ENCODE measurements at regions of chr2 and their contacts with region 1.

Region 1: GRCh38 chr2:37982147-37982582 is 57.1 kb downstream of the RMDN2 start:
- DNase-seq: peak; percentile 52
- H3K4me3 ChIP-seq: no peak overlapping the region
- H3K27ac ChIP-seq: no peak overlapping the region
- H3K4me1 ChIP-seq: peaks cover 11% of the 10 kb centered on the region
- H3K27me3 ChIP-seq: no peaks in the 10 kb centered on the region
- CTCF ChIP-seq: peak; percentile 77 to 80

Region 2: GRCh38 chr2:37397166-37397565 is 585.0 kb before region 1 on chr2:
- CTCF ChIA-PET with region 1: no interaction called
- dilution Hi-C with region 1: no loop called
- in situ Hi-C with region 1: no loop called
- intact Hi-C with region 1: loop called (anchors 2 kb)
- DNase-seq: no peak
- H3K4me3 ChIP-seq: no peak overlapping the region
- H3K27ac ChIP-seq: no peak overlapping the region
- H3K4me1 ChIP-seq: no peaks in the 10 kb centered on the region
- H3K27me3 ChIP-seq: no peaks in the 10 kb centered on the region
- CTCF ChIP-seq: no peak

Region 3: GRCh38 chr2:37890893-37891495 is 91.2 kb before region 1 on chr2:
- CTCF ChIA-PET with region 1: no interaction called
- dilution Hi-C with region 1: no loop called
- in situ Hi-C with region 1: no loop called
- intact Hi-C with region 1: loop called (anchors 2 kb)
- DNase-seq: peak; percentile 40
- H3K4me3 ChIP-seq: no peak overlapping the region
- H3K27ac ChIP-seq: no peak overlapping the region
- H3K4me1 ChIP-seq: peaks cover 16% of the 10 kb centered on the region
- H3K27me3 ChIP-seq: no peaks in the 10 kb centered on the region
- CTCF ChIP-seq: peak; percentile 67 to 82

Region 4: DNA sequence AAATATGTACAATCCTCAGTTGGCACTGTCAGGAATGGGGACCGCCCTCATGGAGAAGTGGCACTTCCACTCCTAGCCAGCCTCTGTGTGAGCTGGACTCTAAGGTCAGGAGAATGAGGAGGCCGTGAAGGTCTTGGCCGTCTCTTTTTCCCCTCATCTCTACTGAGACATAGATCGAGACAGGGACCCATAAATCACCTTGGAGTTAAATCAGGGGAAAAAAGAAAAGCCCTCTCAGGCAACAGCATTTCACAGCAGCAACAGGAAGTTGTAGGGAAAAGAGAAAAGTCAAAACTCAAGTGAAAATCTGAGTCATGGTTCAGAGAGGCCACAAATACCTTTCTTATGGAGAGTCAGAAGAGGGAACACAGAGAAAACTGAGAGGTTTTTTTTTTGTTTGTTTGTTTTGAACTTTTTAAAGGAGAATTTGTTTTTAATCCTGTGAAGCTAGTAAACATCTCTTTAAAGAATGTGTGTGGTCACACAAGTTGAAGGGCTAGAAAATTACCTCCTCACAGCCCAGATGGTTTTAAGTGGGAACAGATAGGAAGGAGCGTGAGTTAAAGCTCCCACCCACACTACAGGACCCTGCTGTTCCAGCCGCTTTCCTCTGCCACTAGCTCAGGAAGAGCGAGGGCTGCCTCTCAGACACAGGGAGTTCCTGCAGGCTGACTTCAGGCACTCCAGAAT is 124.4 kb after region 1 on chr2:
- CTCF ChIA-PET with region 1: no interaction called
- dilution Hi-C with region 1: no loop called
- in situ Hi-C with region 1: loop called (anchors 10 kb)
- intact Hi-C with region 1: no loop called
- DNase-seq: peak; percentile 60
- H3K4me3 ChIP-seq: no peak overlapping the region
- H3K27ac ChIP-seq: peak overlapping the region; percentile 74
- H3K4me1 ChIP-seq: peaks cover 27% of the 10 kb centered on the region
- H3K27me3 ChIP-seq: no peaks in the 10 kb centered on the region
- CTCF ChIP-seq: no peak

Region 5: DNA sequence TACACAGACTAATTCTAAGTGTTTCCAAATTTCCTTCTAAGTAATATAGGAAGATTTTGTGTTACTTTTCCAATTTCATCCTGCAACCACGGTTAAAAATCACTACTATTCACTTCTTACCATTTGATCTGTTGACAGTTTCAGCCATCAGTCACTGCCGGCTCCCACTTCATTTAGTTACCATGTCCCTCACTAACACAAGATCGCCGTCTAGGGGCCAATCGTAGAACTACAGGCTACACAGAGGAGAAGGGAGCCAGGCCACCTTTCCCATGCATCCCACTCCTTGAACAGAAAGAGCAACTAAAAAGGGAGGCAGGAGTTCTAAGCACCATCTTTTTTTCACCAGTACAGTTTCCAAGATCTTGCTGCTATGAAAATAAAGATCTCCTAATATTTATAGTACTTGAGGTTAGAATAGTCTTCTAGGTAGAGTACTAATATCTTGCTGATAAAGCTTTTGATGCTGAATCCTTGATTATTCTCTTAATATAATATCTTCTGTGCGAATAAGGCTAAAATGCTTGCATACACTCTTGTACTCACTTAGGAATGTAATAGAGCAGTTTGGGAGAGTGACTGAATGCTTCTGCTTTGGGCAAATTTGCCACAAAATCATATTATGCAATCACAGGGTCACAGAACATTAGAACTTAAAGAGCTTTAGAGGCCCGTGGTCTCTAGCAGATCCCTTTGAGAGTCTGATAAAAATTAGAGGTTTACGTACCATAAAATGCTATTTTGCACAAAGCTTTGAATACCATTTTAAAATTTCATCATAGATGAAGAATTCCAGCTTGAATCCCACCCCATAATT is 133.3 kb after region 1 on chr2:
- CTCF ChIA-PET with region 1: no interaction called
- dilution Hi-C with region 1: no loop called
- in situ Hi-C with region 1: loop called in 1 of 2 experiments (anchors 10 kb)
- intact Hi-C with region 1: loop called (anchors 1 kb)
- DNase-seq: peak; percentile 70
- H3K4me3 ChIP-seq: no peak overlapping the region
- H3K27ac ChIP-seq: peak overlapping the region; percentile 29
- H3K4me1 ChIP-seq: peaks cover 25% of the 10 kb centered on the region
- H3K27me3 ChIP-seq: no peaks in the 10 kb centered on the region
- CTCF ChIP-seq: peak; percentile 100

Region 6: DNA sequence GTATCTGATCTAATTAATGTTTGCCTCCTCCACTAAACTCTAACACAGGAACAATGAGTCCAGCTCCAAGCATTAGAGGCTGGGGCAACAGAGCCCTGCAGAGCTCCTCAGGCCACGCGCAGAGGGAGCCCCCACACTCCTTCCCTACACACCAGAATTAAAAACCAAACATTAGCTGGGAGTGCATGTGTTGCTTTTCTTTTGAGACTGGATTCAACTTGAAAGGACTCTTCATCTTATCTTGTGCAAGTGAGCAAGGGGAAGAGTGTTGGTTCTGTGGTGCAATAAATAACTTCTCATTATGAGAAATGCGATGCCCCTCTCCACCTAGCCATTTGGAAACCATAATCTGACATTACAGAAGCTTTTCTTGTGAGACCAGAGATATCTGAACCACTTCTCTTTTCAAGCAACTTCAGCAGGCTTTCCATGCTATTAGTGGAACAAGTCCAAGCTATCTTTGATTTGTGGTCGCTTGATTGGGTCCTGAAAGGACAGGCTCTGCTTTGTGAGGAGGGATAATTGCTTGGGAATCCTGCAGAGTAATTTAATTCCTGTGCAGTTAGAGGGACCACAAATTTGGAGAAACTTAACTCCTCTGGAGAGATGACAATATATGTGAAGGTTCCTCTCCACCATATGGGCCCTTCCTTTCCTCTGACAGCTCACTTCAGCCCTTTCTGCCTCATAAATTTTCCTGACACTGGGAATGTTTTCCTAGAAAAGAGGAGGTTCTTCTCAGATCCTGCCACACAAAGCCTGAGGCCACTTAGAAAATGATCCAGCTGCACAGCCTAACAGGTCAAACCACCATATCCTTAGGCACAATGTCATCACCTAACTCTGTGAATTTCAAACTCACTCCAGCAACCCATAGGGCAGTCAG is 282.5 kb after region 1 on chr2:
- CTCF ChIA-PET with region 1: no interaction called
- dilution Hi-C with region 1: no loop called
- in situ Hi-C with region 1: loop called in 1 of 2 experiments (anchors 5 kb)
- intact Hi-C with region 1: no loop called
- DNase-seq: no peak
- H3K4me3 ChIP-seq: no peak overlapping the region
- H3K27ac ChIP-seq: no peak overlapping the region
- H3K4me1 ChIP-seq: no peaks in the 10 kb centered on the region
- H3K27me3 ChIP-seq: no peaks in the 10 kb centered on the region
- CTCF ChIP-seq: no peak

Region 7: DNA sequence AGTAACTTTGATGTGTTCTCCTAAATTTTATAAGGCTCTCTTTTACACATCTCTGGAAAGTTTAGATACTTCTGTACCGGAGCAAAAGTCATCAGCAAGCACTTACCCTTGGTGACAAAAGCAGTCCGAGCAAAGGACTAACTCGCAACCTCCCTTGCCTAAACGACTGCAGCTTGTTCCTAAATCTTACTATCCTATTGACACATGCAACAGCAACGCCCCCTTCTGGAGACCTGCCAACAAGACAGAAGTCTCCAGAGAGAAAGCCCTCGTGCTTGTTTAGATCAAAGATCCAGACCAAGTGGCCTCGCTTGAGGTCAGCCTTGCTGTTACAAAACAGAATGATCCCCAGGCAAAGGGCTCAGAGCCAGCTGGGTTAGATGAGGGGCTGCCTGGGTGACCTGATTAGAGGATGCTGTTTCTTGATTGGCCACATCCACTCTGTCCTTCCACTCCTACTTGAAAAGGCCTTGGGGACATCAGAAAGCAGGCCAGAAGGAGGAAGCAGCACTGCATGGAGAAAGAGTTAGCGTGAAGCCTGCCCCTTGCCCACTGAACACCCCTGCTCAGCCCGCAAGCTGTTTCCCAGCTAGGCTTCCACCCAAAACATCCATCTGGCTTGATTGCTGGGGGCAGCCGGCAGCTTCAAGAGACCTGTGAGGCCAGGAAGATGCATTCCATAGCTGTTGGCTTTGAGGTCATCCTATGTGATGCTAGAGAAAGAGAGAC is 526.3 kb after region 1 on chr2:
- CTCF ChIA-PET with region 1: no interaction called
- dilution Hi-C with region 1: no loop called
- in situ Hi-C with region 1: no loop called
- intact Hi-C with region 1: loop called (anchors 2 kb)
- DNase-seq: peak; percentile 70
- H3K4me3 ChIP-seq: no peak overlapping the region
- H3K27ac ChIP-seq: no peak overlapping the region
- H3K4me1 ChIP-seq: peaks cover 24% of the 10 kb centered on the region
- H3K27me3 ChIP-seq: no peaks in the 10 kb centered on the region
- CTCF ChIP-seq: peak; percentile 68 to 75

Measured in mammary epithelial cell (primary cell).